Posterior cingulate gyrus (tissue), 11 donors: ENCODE measurements at regions of chr13 and their contacts with region 1.

Region 1: DNA sequence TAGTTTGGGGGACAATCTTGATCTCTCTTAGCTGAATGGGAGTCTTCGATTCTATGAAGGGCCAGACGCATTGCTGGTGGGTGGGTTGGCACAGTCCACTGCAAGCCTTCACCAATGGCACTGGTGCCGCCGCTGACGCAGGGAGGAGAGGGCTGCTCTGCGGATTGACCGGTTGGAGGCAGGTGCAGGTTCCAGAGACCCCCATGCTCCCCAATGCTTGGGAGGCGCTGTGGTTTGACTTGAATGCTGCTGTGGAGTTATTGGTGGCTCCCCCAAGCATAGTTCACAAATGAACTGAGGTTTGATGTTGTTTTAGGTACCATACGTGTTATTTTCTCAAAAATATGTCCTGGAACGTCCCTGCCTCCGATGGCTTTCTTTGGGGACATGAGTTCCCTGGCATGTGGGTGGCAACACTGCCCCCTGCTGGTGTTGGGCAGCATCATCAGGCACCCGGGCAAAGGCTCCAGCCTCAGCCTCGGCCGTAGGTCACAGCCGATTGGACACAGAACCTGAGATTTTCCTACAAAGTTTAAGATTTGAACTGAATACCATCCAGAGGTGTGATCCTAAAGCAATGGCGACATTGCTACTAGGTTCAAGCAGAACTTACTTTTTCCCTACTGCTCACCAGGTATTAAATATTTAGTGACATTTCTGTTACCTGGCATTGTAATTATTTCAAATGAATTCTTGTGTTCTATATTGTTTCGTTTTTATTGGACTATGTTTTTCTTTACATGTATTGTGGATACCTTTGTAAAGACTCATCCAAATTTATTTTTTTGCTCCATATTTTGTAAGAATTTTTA is 95.5 kb downstream of the ANKRD10 start:
- DNase-seq: peak; percentile 60 to 97 (median 84)

Region 2: GRCh38 chr13:110455941-110456340 is 363.5 kb before region 1 on chr13:
- intact Hi-C with region 1: loop called (anchors 5 kb)
- DNase-seq: peak; percentile 59 to 97 (median 81)

Region 3: GRCh38 chr13:110597041-110597691 is 222.2 kb before region 1 on chr13:
- intact Hi-C with region 1: loop called (anchors 5 kb)
- DNase-seq: no peak

Region 4: GRCh38 chr13:110644892-110645521 is 174.4 kb before region 1 on chr13:
- intact Hi-C with region 1: loop called (anchors 2 kb)
- DNase-seq: peak; percentile 60 to 97 (median 73)

Region 5: GRCh38 chr13:110702591-110703526 is 116.5 kb before region 1 on chr13:
- intact Hi-C with region 1: no loop called
- DNase-seq: peak in 1 of 10 donors; percentile 75

Region 6: GRCh38 chr13:110715395-110716235 is 103.8 kb before region 1 on chr13:
- intact Hi-C with region 1: loop called (anchors 1 kb)
- DNase-seq: peak; percentile 94 to 100 (median 98)

Region 7: DNA sequence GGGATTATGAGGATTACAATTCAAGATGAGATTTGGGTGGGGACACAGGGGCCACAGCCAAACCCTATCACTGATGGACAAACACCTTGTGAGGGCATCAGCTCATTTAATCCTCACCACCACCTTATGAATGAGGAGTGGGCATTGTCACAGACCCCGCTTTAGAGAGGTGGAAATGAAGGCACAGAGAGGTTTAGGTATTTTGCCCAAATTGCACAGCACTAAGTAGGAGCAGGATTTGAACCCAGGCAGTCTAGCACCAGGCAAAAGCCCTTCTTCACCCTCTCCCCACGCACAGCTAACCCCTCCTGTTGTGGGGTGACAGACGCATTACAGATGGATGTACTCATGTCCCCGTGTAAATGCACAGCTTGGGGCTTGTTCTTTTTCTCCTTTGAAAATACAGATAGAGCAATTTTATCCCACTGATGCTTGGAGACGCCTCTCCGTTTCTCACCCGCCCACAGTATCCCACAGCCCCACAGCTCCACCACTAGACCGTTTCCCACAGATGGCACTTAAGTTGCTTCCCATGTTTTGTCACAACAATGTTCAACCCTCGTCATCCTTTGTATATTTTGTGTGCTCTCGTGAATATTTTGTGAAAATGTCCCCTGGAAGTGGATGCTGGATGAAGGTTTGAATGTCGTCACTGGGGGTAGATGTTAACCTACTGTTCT is 47.2 kb after region 1 on chr13:
- intact Hi-C with region 1: no loop called
- DNase-seq: peak in 3 of 10 donors; percentile 33 to 87 (median 38)